Activated CD8-positive, alpha-beta T cell treated with anti-CD3 and anti-CD28 coated beads for 36 hours (primary cell): ENCODE measurements at regions of chr17 and their contacts with region 1.

Region 1: DNA sequence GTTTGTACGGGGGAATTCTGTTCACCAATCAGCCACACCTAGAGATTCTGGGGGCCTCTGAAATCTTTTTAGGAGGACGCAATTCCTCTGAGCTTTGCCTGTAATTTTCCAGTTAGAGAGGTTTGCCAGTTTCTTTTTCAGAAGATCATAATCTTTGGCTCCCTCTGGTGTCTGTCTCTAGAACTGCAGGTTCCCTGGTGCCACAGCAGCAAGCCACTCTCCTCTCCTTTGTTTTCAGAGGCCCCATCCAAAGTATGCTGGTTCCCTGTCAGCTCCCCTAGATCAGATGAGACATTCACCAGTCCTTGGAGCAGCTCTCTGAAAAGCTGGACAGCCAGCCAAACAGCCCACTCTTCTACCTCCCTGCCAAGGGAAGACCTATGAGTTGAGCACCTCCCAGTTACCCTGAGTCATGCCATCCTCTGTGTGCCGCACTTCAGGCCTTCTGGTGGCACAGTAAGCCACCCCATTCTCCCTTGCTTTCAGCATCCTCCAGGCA is 36.1 kb downstream of the RNF112 start:
- DNase-seq: peak; percentile 76
- ATAC-seq: peak; percentile 67
- H3K4me3 Mint-ChIP-seq: no peak overlapping the region
- H3K27ac Mint-ChIP-seq: no peak overlapping the region
- H3K4me1 Mint-ChIP-seq: no peaks in the 10 kb centered on the region
- H3K27me3 Mint-ChIP-seq: peaks cover 4% of the 10 kb centered on the region
- CTCF ChIP-seq: peak; percentile 96

Region 2: DNA sequence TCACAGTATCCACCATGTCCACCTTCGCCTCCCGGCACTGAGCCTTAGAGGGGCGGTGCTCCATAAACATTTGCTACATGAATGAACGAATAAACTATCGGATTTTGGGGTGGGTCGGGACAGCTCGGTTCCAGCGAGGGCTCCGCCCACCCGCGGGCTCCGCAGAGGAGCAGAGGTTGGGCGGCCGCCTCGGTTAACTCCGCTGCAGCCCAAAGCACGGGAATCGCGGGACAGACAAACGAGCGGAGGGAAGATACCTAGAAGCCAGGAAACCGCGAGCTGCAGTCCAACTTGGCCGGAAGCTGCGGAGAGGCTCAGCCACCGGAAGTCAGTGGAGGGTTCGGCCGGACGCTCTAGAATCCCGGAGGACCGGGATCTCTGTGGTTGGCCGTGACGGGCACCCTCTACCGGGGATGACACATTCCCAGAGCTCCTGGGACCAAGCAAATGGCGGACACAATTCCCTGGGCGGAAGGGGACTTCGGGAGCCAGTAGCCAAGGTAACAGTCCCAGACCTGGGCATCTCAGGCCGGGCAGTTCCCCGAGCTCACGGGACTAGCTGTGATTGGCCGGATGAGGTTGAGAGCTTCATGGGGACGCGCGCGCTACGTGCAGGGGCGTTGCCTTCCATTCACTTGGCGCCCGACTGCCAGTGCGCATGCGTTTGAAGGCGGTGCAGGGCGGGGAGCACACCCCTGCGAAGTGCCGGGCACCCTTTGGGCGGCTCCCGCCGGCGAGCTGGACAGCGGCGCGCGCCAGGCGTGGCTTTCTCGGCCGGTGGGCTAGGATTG is 69.3 kb before region 1 on chr17:
- CTCF ChIA-PET with region 1: interaction called, 10 read pairs
- POLR2A ChIA-PET with region 1: no interaction called
- intact Hi-C with region 1: no loop called
- DNase-seq: peak; percentile 96
- ATAC-seq: peak; percentile 92
- H3K4me3 Mint-ChIP-seq: peak overlapping the region; percentile 98
- H3K27ac Mint-ChIP-seq: peak overlapping the region; percentile 95
- H3K4me1 Mint-ChIP-seq: peaks cover 17% of the 10 kb centered on the region
- H3K27me3 Mint-ChIP-seq: no peaks in the 10 kb centered on the region
- CTCF ChIP-seq: no peak

Region 3: DNA sequence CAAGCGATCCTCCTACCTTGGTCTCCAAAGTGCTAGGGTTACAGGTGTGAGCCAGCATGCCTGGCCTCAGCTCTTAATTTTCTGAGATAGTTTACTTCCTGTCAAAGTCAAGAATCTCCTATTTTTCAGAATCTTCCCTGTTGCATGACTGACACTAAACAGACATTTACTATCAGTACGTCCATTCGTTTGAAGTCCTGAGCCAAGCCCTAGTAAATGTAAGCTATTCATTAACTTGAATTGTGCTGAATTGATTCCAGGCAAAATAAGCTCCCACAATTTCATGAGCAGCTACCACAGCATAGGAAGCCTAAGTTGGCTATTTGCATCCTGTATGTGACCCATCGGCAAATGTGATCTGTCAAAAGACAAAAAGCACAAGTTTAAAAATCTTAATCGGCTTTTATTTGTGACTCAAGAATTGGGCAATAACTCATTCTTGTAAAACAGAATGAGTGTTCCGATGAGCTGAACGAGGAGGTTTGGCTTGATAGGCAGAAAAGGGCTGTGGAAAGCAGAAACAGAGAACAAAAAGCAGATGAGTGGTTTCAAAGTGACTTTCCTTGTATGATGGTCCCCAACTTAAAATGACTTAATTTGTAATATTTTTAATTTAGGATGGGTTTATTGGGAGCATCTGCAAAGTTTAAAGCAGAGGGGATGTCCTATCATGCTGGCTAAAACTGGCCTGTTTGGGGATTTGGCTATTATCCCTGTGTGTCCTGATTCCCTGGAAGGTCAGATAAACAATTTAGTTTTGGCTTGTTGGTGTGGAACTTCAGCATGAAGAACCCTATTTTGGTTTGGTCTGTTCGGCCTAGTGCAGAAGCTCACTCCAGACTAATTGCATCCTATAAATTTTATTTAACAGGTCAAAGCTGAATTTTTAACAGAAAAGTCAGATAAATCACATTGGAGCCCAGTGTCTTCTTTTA is 21.9 kb before region 1 on chr17:
- CTCF ChIA-PET with region 1: interaction called, 12 read pairs
- POLR2A ChIA-PET with region 1: no interaction called
- intact Hi-C with region 1: no loop called
- DNase-seq: no peak
- ATAC-seq: no peak
- H3K4me3 Mint-ChIP-seq: no peak overlapping the region
- H3K27ac Mint-ChIP-seq: no peak overlapping the region
- H3K4me1 Mint-ChIP-seq: no peaks in the 10 kb centered on the region
- H3K27me3 Mint-ChIP-seq: peaks cover 5% of the 10 kb centered on the region
- CTCF ChIP-seq: no peak

Region 4: DNA sequence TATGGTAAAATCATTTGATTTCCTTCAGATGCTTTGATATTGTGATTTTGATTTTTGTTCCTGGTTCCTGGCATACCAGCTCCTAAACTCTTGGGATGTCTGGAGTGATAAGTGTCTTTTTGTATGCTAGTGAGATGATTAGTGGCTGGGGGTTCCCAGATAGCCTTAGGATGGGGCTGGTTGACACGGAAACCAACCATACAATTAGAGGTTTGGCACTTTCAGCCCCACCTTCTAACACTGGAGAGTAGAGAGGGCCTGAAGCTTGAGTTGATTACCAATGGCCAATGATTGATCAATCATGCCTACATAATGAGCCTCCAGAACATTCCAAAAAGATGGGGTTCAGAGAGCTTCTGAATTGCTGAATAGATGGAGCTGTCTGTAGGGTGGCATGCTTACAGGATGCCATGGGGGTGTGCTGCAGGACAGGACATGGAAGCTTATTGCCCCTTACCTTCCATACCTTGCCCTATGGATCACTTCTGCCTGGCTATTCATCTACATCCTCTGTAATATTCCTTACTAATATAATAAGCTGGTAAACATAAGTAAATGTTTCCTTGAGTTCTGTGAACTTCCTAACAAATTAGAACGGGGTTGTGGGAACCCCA is 13.3 kb before region 1 on chr17:
- CTCF ChIA-PET with region 1: interaction called, 22 read pairs
- POLR2A ChIA-PET with region 1: no interaction called
- intact Hi-C with region 1: no loop called
- DNase-seq: no peak
- ATAC-seq: no peak
- H3K4me3 Mint-ChIP-seq: no peak overlapping the region
- H3K27ac Mint-ChIP-seq: no peak overlapping the region
- H3K4me1 Mint-ChIP-seq: no peaks in the 10 kb centered on the region
- H3K27me3 Mint-ChIP-seq: peaks cover 4% of the 10 kb centered on the region
- CTCF ChIP-seq: no peak

Region 5: GRCh38 chr17:19460700-19461099 is 13.6 kb after region 1 on chr17:
- CTCF ChIA-PET with region 1: interaction called, 25 read pairs
- POLR2A ChIA-PET with region 1: no interaction called
- intact Hi-C with region 1: no loop called
- DNase-seq: no peak
- ATAC-seq: no peak
- H3K4me3 Mint-ChIP-seq: no peak overlapping the region
- H3K27ac Mint-ChIP-seq: no peak overlapping the region
- H3K4me1 Mint-ChIP-seq: peaks cover 33% of the 10 kb centered on the region
- H3K27me3 Mint-ChIP-seq: no peaks in the 10 kb centered on the region
- CTCF ChIP-seq: no peak

Region 6: GRCh38 chr17:19533718-19534561 is 86.8 kb after region 1 on chr17 and contains the start of gene SLC47A1:
- CTCF ChIA-PET with region 1: no interaction called
- POLR2A ChIA-PET with region 1: no interaction called
- intact Hi-C with region 1: no loop called
- DNase-seq: peak; percentile 11
- ATAC-seq: peak; percentile 65
- H3K4me3 Mint-ChIP-seq: peak within 1 kb of the TSS; percentile 59
- H3K27ac Mint-ChIP-seq: no peak within 1 kb of the TSS
- H3K4me1 Mint-ChIP-seq: peaks cover 12% of the 10 kb centered on the region
- H3K27me3 Mint-ChIP-seq: peaks cover 59% of the 10 kb centered on the region
- CTCF ChIP-seq: no peak
- total RNA-seq, gene SLC47A1: 0.11 TPM in 1 of 2 experiments, not detected in the other